Ascending aorta (tissue), 2 donors: ENCODE measurements at regions of chr5 and their contacts with region 1.

Region 1: DNA sequence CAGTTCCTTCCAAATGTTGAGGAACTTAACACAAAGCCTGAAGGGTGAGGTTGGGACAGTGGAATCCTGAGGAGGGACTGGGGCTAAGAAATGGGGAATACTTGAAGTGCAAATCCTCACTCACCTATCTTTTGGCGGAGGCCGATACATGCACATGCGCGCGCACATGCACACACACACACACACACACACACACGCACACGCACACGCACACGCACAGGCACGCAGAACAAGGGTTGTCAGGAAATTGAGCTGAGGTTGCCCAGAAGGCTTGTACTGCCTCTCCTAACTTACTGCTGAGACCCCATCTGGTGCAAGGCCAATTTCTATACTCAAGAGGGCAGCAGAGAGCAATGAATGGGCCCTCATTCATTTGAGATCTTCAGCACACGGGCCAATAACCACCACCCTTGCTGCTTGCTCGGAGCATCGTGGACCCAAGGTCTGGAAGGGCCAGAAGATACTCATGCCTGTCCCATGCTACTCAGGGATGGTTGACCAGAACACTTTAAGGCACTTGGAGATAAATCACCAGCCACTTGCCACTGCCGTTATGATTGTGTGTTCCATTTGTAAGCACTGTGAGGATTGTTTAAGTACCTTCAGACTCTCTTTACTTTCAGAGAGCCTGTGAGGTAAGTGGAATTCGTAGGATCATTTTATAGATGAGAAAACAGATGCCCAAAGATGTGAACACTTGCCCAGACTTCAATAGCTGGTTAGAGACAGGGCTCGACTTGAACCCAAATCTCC is 21.5 kb downstream of the BTF3 start:
- DNase-seq: peak in 1 of 2 donors; percentile 85
- H3K4me3 ChIP-seq: no peak overlapping the region
- H3K27ac ChIP-seq: no peak overlapping the region
- H3K4me1 ChIP-seq: peaks cover 0 to 3% of the 10 kb centered on the region in 2 donors
- H3K27me3 ChIP-seq: no peaks in the 10 kb centered on the region
- CTCF ChIP-seq: peak; percentile 67 to 72 (median 67)

Region 2: GRCh38 chr5:72860499-72860898 is 659.2 kb before region 1 on chr5:
- intact Hi-C with region 1: no loop called
- DNase-seq: no peak
- H3K4me3 ChIP-seq: no peak overlapping the region
- H3K27ac ChIP-seq: peak overlapping the region in 1 of 2 donors; percentile 53
- H3K4me1 ChIP-seq: peaks cover 0 to 17% of the 10 kb centered on the region in 2 donors
- H3K27me3 ChIP-seq: no peaks in the 10 kb centered on the region
- CTCF ChIP-seq: no peak

Region 3: GRCh38 chr5:73540192-73540591 is 20.5 kb after region 1 on chr5:
- intact Hi-C with region 1: loop called (anchors 1 kb)
- DNase-seq: no peak
- H3K4me3 ChIP-seq: no peak overlapping the region
- H3K27ac ChIP-seq: no peak overlapping the region
- H3K4me1 ChIP-seq: peaks cover 11 to 22% of the 10 kb centered on the region in 2 donors
- H3K27me3 ChIP-seq: no peaks in the 10 kb centered on the region
- CTCF ChIP-seq: no peak